ENCODE measurements at regions of chr15 and their contacts with region 1.

Region 1: DNA sequence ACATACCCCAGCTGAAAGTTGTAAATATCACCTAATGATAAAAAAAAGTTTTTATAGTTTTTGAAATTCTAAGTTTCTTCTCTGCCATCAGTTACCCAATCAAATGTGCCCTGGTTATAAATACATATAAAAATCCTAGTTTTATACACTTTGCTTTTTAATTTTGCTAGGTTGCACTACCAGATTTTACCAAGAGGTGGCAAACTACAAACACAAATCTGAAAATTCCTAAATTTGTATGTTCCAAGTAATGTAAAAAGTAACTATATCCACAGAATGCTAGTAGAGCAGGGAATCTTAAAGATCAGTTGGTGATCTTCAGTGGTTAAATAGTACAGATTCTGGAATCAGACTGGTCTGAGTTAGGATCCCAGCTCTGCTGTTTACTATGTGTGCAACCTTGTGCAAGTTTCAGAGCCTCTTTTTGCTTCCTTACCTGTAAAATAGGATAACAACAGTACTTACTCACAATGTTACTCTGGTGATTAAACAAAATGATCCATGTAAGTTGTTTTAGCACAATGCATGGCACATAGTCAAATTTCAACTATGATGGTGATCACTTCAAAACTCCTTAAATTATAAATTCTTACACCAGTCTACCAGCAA is 11.0 kb downstream of the TRPM7 start:
- DNase-seq: no peak

Region 2: DNA sequence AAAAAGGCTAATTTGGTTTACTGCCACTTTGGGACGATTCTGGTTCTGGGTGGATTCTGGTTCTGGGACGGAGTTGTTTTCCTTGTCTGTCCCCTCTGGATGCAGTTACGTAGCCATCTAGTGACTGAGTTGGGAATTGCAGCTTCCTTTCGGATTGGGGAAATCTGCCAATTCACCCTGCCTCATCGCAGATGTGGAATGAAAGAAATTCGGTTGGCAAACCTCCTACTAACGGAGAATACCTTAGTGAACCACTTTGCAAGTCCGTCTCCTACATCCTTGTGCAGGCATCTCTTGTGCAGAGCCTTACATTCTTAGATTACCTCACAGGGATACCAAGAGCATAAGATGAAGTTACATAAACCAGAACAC is 201.3 kb after region 1 on chr15:
- intact Hi-C with region 1: loop called (anchors 1 kb)
- DNase-seq: no peak

Measured in cardiac septum (tissue), 1 donor.